HCT116 (cell line): ENCODE measurements at regions of chr15 and their contacts with region 1.

Region 1: DNA sequence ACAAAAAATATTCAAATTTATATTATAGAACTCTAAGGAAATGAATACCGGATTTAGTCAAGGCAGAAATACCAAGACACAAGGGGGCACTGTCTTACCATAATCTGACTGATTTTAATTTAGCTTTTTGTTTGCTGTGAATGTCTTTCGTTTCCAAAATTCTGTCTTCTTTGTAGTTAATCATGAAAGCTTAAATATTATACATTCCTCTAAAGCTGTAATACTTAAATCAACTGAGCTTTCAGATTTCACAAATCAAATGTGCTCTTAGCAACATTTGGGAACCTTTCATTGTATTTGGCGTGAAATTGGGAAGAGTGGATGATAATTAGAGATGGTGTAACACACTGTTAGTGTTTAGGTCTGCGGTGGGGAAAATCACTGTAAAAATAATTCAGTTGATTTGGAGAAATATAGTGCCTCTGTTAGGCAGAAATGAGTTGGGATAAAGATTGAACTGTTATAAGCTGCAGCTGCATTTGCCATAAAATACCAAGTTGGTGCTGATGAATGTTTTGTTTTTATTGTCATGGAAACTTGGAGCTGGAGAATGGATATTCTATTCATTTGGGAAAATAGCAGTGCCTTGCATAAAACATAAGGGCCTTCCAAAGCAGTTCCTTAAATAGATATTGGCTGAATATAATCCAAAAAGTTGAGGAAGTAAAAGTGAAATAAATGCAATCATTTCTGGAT is 228.2 kb downstream of the TCF12 start:
- DNase-seq: peak; percentile 8
- ATAC-seq: no peak
- H3K4me3 ChIP-seq: no peak overlapping the region
- H3K27ac ChIP-seq: no peak overlapping the region
- H3K4me1 ChIP-seq: no peaks in the 10 kb centered on the region
- H3K27me3 ChIP-seq: no peaks in the 10 kb centered on the region
- CTCF ChIP-seq: peak; percentile 44 to 67 (median 48); a peak in 5 of 6 replicates
- POLR2A ChIP-seq: no peak
- RAD21 ChIP-seq: peak; percentile 62

Region 2: GRCh38 chr15:57213862-57214261 is 67.2 kb after region 1 on chr15:
- CTCF ChIA-PET with region 1: interaction called, 29 read pairs
- POLR2A ChIA-PET with region 1: no interaction called
- RAD21 ChIA-PET with region 1: interaction called, 3 read pairs
- intact Hi-C with region 1: no loop called
- DNase-seq: peak; percentile 21
- ATAC-seq: peak; percentile 74
- H3K4me3 ChIP-seq: no peak overlapping the region
- H3K27ac ChIP-seq: no peak overlapping the region
- H3K4me1 ChIP-seq: peaks cover 8 to 9% of the 10 kb centered on the region in 2 experiments; a peak in 3 of 4 replicates
- H3K27me3 ChIP-seq: no peaks in the 10 kb centered on the region
- CTCF ChIP-seq: peak in 2 of 3 experiments; percentile 41 to 55; a peak in 3 of 6 replicates
- POLR2A ChIP-seq: no peak
- RAD21 ChIP-seq: peak; percentile 74